Activated CD4-positive, alpha-beta T cell treated with anti-CD3 and anti-CD28 coated beads for 36 hours (primary cell): ENCODE measurements at regions of chr2 and their contacts with region 1.

Region 1: GRCh38 chr2:128027801-128028667 is at the start of gene SAP130:
- DNase-seq: peak; percentile 99
- ATAC-seq: peak; percentile 83
- H3K4me3 Mint-ChIP-seq: peak within 1 kb of the TSS; percentile 93
- H3K27ac Mint-ChIP-seq: peak within 1 kb of the TSS; percentile 70
- H3K4me1 Mint-ChIP-seq: peaks cover 13% of the 10 kb centered on the region
- H3K27me3 Mint-ChIP-seq: no peaks in the 10 kb centered on the region
- total RNA-seq, gene SAP130: 28.2 to 35.8 TPM

Region 2: DNA sequence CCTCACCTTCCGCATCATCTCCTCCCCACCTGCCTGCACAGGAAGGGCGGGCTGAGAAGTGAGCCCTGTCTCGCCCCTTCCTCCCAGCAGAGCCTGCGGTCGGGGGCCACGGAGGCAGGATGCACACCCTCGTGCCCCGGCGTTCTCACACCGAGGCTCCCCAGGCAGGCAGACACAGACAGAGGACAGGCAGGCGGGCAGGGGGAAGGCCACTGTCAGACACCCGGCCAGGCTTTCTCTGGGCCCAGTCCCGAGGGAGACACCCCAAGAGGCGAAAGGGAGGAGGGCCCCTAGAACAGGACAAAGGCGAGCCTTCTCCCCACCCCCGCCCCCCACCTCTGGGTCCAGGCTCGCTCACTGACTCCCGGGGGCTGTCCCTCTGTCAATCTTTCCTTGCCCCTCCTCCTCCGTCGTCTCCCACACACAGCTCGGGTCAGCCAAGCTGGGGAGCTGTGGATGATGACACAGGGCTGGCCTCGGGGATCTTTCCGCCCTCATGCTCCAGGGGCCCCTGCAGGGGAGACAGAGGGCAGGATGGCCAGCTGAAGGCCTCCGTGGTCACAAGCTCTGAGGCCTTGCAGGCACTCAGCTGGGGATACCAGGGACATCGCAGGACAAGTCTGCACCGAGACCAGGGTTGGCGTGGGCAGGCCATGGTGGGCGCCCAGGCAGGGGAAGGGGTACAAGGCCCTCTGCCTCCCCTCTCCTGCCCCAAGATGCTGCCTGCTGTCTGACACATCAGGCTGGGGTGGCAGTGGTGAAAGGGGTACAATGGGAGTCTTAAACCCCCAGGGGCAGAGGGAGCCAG is 946.0 kb before region 1 on chr2:
- CTCF ChIA-PET with region 1: no interaction called
- POLR2A ChIA-PET with region 1: no interaction called
- intact Hi-C with region 1: loop called in 1 of 2 experiments (anchors 5 kb)
- DNase-seq: peak; percentile 87
- ATAC-seq: peak; percentile 50
- H3K4me3 Mint-ChIP-seq: peak overlapping the region; percentile 82
- H3K27ac Mint-ChIP-seq: peak overlapping the region; percentile 91
- H3K4me1 Mint-ChIP-seq: peaks cover 75% of the 10 kb centered on the region
- H3K27me3 Mint-ChIP-seq: no peaks in the 10 kb centered on the region

Region 3: GRCh38 chr2:127701193-127701650 is 326.8 kb before region 1 on chr2 and contains the start of gene SFT2D3:
- CTCF ChIA-PET with region 1: no interaction called
- POLR2A ChIA-PET with region 1: no interaction called
- intact Hi-C with region 1: loop called in 1 of 2 experiments (anchors 1 kb)
- DNase-seq: peak; percentile 95
- ATAC-seq: peak; percentile 87
- H3K4me3 Mint-ChIP-seq: peak within 1 kb of the TSS; percentile 88
- H3K27ac Mint-ChIP-seq: peak within 1 kb of the TSS; percentile 95
- H3K4me1 Mint-ChIP-seq: peaks cover 34% of the 10 kb centered on the region
- H3K27me3 Mint-ChIP-seq: no peaks in the 10 kb centered on the region
- total RNA-seq, gene SFT2D3: 2.8 to 3.1 TPM

Region 4: DNA sequence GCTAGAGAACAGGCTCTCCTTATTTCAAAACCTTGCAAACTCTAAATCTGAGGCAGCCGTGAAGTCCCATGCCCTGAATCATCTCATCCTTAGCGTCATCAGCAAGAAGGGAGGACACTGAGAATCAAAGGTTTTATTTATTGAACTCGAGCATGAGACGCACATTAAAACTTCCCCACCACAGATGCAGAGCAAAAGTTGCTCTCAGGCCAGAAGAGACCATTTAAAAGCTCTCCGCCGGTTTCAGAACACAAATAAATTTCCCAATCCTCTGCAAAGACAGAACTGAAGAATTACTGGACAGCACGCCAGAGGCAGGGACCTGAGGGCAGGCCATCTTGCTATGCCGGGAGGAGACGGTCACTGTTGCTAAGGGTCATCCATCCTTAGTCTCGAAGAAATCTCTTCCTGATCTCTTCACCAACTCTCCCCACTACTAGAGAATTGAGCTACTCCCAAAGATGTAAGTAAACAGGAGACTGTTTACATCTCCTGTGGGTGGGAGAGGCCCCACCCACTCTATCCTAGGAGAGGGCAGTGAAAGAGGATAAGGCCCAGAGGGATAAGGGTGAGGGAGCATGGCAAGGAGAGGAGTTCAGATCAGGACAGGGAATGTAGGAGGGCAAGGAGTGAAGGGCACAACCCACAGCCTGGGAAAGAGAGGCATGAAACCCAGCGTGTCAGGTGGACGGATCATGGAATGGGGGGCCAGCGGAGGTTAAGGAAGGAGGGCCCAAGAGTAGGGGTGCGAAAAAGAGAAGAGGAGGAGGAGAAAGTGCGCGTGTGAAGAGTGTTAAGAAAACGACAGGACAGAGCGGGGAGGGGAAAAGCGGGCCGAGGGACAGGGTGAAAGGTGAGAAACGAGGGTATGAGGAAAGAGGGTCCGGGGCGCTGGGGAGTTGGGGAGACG is 143.3 kb before region 1 on chr2:
- CTCF ChIA-PET with region 1: no interaction called
- POLR2A ChIA-PET with region 1: no interaction called
- intact Hi-C with region 1: loop called (anchors 1 to 5 kb)
- DNase-seq: no peak
- ATAC-seq: no peak
- H3K4me3 Mint-ChIP-seq: peak overlapping the region; percentile 88
- H3K27ac Mint-ChIP-seq: peak overlapping the region; percentile 85
- H3K4me1 Mint-ChIP-seq: peaks cover 57% of the 10 kb centered on the region
- H3K27me3 Mint-ChIP-seq: no peaks in the 10 kb centered on the region

Region 5: DNA sequence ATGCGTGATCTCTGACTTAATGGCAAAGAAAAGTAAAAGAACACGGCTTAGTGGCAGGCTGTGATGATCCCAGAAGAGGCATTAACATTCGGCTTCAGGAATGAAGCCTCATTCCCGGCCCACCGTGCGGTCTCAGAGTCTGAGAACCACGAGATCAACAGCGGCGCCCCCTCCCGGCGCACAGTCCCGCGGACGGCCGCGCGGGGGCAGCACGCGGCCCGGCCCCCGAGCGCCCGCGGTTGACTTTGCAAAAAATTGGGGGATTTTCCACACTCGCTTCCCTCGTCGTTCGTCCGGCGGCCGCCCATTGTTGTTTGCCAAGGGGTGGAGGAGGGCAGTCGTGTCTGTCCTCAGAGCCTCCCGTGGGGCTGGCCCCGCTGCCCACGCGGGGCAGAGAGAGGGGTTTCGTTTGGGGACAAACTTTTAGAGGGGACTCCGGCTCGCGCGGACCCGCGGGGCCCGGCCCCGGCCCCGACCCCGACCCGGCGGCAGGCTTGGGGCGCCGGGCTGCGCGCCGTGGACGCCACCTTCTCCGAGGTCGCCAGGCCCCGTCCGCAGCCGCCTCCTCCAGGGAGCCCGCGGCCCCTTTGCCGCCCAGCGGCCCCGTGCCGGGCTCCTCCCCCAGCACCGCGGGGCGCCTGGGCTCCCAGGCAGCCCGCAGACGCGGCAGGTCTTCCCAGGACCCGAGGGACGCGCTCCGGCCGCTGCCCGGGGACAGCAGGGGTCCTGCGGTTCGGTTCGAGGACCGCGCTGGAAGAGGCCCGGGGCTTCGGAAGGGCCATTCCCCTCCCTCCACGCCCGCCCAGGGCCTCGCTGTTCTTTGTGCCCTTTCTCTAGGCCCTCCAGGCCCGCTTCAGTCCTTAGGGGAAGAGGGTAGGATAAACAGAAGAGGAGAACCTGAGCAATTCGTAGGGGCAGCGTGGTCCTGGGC is 294.0 kb after region 1 on chr2:
- CTCF ChIA-PET with region 1: no interaction called
- POLR2A ChIA-PET with region 1: no interaction called
- intact Hi-C with region 1: loop called in 1 of 2 experiments (anchors 1 kb)
- DNase-seq: peak; percentile 89
- ATAC-seq: peak; percentile 52
- H3K4me3 Mint-ChIP-seq: peak overlapping the region; percentile 51
- H3K27ac Mint-ChIP-seq: peak overlapping the region; percentile 60
- H3K4me1 Mint-ChIP-seq: peaks cover 6% of the 10 kb centered on the region
- H3K27me3 Mint-ChIP-seq: no peaks in the 10 kb centered on the region